Lower leg skin (tissue), 4 donors: ENCODE measurements at regions of chr1 and their contacts with region 1.

Region 1: DNA sequence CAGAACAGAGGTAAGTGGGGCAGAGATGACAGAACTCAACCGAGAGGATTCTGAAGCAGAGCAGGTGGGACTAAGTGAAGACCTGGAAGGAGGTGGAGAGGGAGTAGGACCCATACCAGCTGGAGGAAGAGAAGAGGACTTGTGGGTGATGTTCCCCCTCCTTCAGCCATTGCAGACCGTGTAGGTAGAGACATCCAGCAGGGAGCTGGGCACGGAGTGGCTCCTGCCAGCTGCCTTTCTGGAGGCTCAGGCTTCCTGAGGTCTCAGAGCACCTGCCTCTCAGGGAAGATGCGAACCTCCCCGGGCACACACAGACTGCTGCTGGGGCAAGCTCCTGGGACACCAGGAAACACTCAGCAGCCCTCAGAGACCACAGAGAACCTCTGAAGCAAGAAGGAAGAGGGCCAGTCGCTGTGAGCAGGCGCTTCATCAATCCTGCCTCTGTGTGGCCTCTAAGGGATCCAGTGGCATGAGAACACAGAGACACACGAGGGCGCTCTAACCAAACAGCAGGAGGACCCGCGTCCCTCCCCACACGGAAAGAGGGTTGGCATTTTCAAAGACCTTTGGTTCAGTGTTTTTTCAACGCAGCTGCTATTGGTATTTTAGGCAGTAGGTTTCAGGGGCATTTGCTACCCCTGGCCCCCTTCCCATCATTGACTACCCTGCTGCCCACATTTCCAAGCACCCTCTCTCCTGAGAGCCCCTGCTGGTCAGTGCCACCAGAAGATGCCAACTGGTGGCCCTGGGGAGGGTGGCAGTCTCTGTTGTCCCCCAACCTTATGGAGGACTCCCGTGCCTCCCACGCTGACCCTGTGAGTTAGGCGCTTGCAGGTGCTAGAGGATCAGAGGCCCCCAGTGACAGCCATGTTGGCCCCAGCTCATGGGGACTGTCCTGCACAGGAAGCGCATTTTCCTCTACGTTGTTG is 89.6 kb upstream of the EDN2 start:
- DNase-seq: peak; percentile 80 to 94
- H3K4me3 ChIP-seq: no peak overlapping the region
- CTCF ChIP-seq: peak in 1 of 3 donors; percentile 36
- POLR2A ChIP-seq: no peak

Region 2: DNA sequence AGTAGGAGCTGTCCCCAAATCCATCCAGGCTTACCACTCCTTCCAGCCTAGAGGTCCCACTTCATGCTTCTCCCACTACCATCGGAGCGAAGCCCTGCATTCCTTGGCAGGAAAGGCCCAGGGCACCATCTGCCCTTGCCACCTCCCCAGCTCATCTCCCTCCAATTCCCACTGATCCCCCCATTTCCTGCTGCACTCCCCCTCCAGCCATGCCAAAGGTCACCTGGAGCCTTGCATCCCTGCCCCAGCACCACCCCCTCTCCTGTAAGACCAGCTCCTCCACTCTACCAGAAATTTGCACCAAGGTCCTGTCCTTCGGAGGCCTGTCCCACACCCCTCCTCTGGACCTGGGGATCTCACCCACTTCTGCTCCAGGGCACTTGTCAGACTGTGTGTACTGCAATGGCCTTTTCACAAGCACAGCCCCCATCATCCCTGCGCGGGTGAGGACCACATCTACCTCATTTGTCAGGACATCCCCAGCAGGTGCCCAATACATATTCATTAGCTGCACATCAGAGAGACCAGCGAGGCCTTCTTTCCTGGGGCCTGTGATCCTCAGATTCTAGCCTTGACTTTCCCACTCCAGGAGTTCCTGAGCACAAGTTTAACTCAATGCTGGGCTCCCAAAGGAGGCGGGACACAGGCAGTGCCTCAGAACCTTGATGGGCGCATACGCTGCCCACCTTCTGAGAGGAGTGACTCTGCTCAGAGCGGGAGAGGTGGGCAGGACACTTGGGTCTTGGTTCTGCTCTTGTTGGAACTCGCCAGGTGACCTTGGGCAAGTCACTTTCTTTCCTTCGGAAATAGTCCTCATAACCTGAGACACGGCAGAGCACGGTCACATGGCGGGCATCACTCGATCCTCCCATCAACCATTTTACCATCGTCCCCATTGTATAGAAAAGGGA is 39.6 kb before region 1 on chr1:
- intact Hi-C with region 1: loop called (anchors 2 kb)
- DNase-seq: peak in 1 of 2 donors; percentile 62
- H3K4me3 ChIP-seq: no peak overlapping the region
- CTCF ChIP-seq: no peak
- POLR2A ChIP-seq: no peak

Region 3: GRCh38 chr1:41629571-41629970 is 55.5 kb after region 1 on chr1:
- intact Hi-C with region 1: no loop called
- DNase-seq: no peak
- H3K4me3 ChIP-seq: no peak overlapping the region
- CTCF ChIP-seq: no peak
- POLR2A ChIP-seq: no peak

Region 4: DNA sequence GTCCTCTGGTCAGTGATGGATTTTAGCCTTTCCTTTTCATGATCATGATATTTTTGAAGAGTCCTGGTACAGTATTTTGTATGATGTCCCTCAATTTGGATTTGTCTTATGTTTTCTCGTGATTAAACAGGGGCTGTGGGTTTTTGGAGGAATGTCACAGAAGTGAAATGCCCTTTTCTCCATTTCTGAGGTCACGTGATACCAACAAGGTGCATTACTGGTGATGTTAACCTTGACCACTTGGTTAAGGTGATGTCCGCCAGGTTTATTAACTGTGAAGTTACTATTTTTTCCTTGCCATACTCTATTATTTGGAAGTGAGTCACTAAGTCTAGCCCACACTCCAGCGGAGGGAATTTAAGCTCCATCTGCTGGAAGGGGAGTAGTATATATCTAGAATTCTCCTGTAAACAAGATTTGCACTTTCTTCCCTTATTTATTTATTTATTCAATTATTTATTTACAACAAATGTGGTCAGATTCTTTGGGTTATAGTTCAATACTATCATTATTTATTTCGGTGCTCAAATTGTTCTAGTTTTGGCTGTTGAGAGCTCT is 221.2 kb after region 1 on chr1:
- intact Hi-C with region 1: loop called (anchors 10 kb)
- DNase-seq: no peak
- H3K4me3 ChIP-seq: no peak overlapping the region
- CTCF ChIP-seq: no peak
- POLR2A ChIP-seq: no peak

Region 5: GRCh38 chr1:42165511-42166163 is 591.6 kb after region 1 on chr1:
- intact Hi-C with region 1: loop called (anchors 10 kb)
- DNase-seq: peak in 1 of 2 donors; percentile 47
- H3K4me3 ChIP-seq: no peak overlapping the region
- CTCF ChIP-seq: no peak
- POLR2A ChIP-seq: no peak